Endothelial cell of umbilical vein (primary cell): ENCODE measurements at regions of chr2 and their contacts with region 1.

Region 1: GRCh38 chr2:27095745-27096651 is 9.4 kb downstream of the KHK start:
- DNase-seq: peak; percentile 71
- H3K4me3 ChIP-seq: peak overlapping the region in 1 of 3 experiments; percentile 8
- H3K27ac ChIP-seq: no peak overlapping the region
- H3K4me1 ChIP-seq: no peaks in the 10 kb centered on the region
- H3K27me3 ChIP-seq: no peaks in the 10 kb centered on the region
- CTCF ChIP-seq: no peak
- POLR2A ChIP-seq: peak; percentile 63

Region 2: GRCh38 chr2:27032495-27033252 is 63.3 kb before region 1 on chr2 and contains the start of gene TMEM214:
- CTCF ChIA-PET with region 1: no interaction called
- POLR2A ChIA-PET with region 1: no interaction called
- dilution Hi-C with region 1: no loop called
- intact Hi-C with region 1: no loop called
- DNase-seq: peak; percentile 87
- H3K4me3 ChIP-seq: peak within 1 kb of the TSS; percentile 76 to 91 (median 79)
- H3K27ac ChIP-seq: peak within 1 kb of the TSS; percentile 58
- H3K4me1 ChIP-seq: peaks cover 13% of the 10 kb centered on the region
- H3K27me3 ChIP-seq: no peaks in the 10 kb centered on the region
- CTCF ChIP-seq: no peak
- POLR2A ChIP-seq: peak; percentile 80
- total RNA-seq, gene TMEM214: 107 and 109 TPM in 2 replicates

Region 3: GRCh38 chr2:27108221-27108620 is 12.2 kb after region 1 on chr2:
- CTCF ChIA-PET with region 1: interaction called, 10 read pairs
- POLR2A ChIA-PET with region 1: no interaction called
- dilution Hi-C with region 1: no loop called
- intact Hi-C with region 1: no loop called
- DNase-seq: no peak
- H3K4me3 ChIP-seq: no peak overlapping the region
- H3K27ac ChIP-seq: no peak overlapping the region
- H3K4me1 ChIP-seq: no peaks in the 10 kb centered on the region
- H3K27me3 ChIP-seq: no peaks in the 10 kb centered on the region
- CTCF ChIP-seq: no peak
- POLR2A ChIP-seq: no peak

Region 4: DNA sequence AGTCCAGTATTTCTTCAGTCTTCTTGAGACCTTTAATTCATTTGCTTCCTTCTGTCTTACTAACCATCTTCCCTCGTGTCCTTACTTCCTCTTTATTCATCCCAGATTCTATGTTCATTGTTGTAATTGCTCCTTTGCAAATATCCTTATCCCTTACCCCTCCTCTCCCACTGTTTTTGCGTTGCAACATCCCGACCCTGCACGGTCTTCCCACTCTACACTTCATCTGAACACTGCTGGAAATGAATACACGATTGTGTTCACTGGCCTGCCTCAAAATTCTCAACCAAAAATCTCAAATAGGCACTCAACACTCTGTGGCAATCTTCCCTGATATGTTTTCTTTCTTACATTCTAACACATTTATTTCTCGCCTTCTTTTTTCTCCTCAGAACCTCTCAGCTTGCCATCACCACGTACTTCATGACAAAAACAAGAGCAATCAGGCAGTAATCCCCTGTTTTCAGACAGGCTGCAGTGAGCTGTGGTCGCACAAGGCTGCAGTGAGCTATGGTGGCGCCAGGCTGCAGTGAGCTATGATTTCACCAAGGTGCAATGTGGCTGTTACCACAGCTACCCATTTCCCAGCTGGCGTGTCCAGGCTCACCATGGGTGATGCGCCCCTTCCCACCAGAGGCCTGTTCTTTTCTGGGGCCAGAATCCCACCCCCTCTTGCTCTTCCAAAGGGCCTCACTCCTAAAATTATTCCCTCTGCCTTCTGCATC is 78.5 kb after region 1 on chr2:
- CTCF ChIA-PET with region 1: interaction called, 5 read pairs
- POLR2A ChIA-PET with region 1: no interaction called
- dilution Hi-C with region 1: no loop called
- intact Hi-C with region 1: loop called (anchors 5 kb)
- DNase-seq: no peak
- H3K4me3 ChIP-seq: no peak overlapping the region
- H3K27ac ChIP-seq: no peak overlapping the region
- H3K4me1 ChIP-seq: no peaks in the 10 kb centered on the region
- H3K27me3 ChIP-seq: peaks cover 30 to 34% of the 10 kb centered on the region in 2 experiments
- CTCF ChIP-seq: no peak
- POLR2A ChIP-seq: no peak

Region 5: DNA sequence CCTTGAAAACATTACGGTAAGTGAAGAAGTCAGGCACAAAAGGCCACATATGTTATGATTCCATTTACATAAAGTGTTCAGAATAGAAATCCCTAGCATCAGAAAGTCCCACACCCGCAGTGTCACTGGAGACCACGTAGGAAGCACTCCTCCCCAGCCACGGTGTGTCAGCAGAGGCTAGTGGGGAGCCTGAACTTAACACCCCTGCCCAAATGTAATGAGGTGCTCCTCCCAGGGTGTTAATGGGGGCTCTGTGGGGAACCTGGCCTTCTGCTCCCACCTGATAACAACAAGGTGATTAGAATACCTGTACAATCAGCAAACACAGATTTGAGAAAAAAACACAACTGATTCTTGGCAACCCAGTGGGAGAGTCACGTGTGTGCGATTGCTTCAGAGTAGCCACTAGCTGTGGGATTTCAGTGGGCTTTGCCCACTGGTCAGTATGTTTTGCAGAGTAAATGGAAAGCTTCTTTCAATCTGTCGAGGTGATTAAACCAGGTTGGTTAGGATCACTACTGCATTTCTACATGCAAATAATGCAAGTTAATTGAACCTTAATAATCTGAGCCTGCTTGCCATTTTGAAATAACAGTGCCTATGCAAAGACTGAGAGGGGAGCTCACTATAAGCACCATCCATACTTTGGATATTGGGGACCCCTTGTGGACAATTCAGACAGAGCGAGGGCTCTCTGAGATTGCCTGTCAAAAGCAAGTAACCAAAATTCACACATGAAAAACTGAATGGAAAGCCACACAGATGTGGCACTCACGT is 95.2 kb after region 1 on chr2:
- CTCF ChIA-PET with region 1: interaction called, 152 read pairs
- POLR2A ChIA-PET with region 1: no interaction called
- dilution Hi-C with region 1: no loop called
- intact Hi-C with region 1: loop called (anchors 1 kb)
- DNase-seq: peak; percentile 73
- H3K4me3 ChIP-seq: no peak overlapping the region
- H3K27ac ChIP-seq: no peak overlapping the region
- H3K4me1 ChIP-seq: no peaks in the 10 kb centered on the region
- H3K27me3 ChIP-seq: peaks cover 2 to 3% of the 10 kb centered on the region in 2 experiments
- CTCF ChIP-seq: peak; percentile 48 to 65
- POLR2A ChIP-seq: no peak

Region 6: GRCh38 chr2:27211829-27212627 is 116.0 kb after region 1 on chr2 and contains the starts of genes ATRAID and SLC5A6:
- CTCF ChIA-PET with region 1: no interaction called
- POLR2A ChIA-PET with region 1: interaction called, 4 read pairs
- dilution Hi-C with region 1: no loop called
- intact Hi-C with region 1: loop called (anchors 2 kb)
- DNase-seq: peak; percentile 92
- H3K4me3 ChIP-seq: peak within 1 kb of the TSS; percentile 68 to 91 (median 88)
- H3K27ac ChIP-seq: peak within 1 kb of the TSS; percentile 89
- H3K4me1 ChIP-seq: peaks cover 17% of the 10 kb centered on the region
- H3K27me3 ChIP-seq: no peaks in the 10 kb centered on the region
- CTCF ChIP-seq: no peak
- POLR2A ChIP-seq: peak; percentile 98
- total RNA-seq, gene ATRAID: 84.3 and 86.6 TPM in 2 replicates
- total RNA-seq, gene SLC5A6: 42.7 and 52.0 TPM in 2 replicates

Region 7: DNA sequence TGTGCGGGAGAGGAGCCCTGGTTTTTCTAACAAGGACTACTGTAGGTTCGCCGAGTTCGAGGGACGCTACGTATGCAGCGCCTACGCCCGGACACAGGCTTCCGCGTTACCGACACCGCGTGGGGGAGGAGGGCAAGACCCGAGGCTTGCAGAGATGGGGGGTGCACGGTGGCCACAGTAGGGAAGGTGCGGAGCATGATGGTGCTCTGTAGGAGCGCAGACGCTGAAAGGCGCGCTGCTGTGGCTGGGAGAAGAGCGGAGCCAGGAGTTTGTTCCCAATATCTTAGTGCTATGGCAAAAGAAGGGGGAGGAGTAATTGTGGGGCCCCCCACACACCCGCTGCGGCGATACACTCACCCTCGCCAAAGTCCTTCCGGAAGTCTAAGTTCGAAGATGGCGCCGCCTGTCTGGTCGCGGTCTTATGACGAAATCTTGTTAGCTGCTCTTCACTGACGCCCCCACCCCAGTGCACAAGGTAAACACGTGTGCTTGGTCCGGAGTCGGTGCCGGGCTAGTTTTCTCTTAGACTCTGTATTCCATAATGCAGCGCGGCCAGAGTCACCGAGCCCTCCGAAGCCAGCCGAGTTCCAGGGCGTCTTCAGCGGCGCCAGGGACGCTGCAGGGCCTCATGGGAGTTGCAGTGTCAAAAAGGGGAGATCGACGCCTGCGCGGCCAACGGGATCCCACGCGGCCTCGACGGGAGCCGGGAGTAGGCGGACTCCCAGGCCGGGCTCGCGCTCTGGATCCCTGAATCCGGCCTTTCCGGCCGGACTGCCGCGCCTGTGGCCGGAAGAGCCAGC is 260.6 kb after region 1 on chr2 and contains the start of gene GTF3C2:
- CTCF ChIA-PET with region 1: no interaction called
- POLR2A ChIA-PET with region 1: no interaction called
- dilution Hi-C with region 1: no loop called
- intact Hi-C with region 1: loop called (anchors 5 kb)
- DNase-seq: peak; percentile 98
- H3K4me3 ChIP-seq: peak within 1 kb of the TSS; percentile 40 to 90 (median 63)
- H3K27ac ChIP-seq: peak within 1 kb of the TSS; percentile 83
- H3K4me1 ChIP-seq: peaks cover 16% of the 10 kb centered on the region
- H3K27me3 ChIP-seq: no peaks in the 10 kb centered on the region
- CTCF ChIP-seq: no peak
- POLR2A ChIP-seq: no peak
- total RNA-seq, gene GTF3C2: 57.4 and 63.2 TPM in 2 replicates